Gastrocnemius medialis (tissue), 4 donors: ENCODE measurements at regions of chr12 and their contacts with region 1.

Region 1: DNA sequence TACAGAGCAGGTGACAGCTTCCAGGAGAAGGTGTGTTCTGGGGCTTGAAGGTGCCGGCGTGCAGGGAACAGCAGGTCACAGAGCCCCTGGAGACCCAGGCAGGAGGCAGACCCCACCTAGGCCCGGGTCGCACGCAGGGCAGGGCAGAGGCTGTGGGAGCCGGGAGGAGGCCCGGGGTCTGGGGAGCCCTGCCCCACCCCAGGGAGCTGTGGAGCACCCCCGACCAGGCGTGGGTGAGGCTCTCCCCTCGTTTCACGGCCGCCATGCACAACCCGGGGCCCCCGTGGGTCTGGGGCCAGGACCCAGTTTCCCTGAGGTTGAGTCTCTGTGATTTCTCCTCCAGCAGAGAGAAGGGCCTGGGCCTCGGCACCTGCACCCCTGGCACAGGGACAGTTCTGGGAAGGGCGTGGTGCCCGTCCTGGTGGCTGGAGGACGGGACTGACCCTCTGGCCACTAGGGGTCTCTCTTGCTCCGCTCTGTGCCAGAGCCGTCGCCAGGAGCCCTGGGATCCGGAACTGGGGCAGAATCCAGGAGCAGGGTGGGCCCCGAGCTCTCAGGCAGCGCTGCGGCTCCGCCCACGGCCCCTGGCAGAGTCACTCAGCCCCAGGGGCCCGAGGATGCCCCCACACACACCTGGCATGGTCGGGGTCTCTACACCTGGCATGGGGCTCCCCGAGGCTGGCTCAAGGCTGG is 75.2 kb upstream of the FBRSL1 start:
- DNase-seq: peak; percentile 47 to 57
- ATAC-seq: peak; percentile 89 to 92
- H3K4me3 ChIP-seq: no peak overlapping the region
- H3K27ac ChIP-seq: no peak overlapping the region
- H3K4me1 ChIP-seq: no peaks in the 10 kb centered on the region
- H3K27me3 ChIP-seq: peaks cover 30 to 33% (median 31%) of the 10 kb centered on the region in 3 donors
- CTCF ChIP-seq: peak; percentile 74 to 93 (median 86)
- POLR2A ChIP-seq: no peak

Region 2: DNA sequence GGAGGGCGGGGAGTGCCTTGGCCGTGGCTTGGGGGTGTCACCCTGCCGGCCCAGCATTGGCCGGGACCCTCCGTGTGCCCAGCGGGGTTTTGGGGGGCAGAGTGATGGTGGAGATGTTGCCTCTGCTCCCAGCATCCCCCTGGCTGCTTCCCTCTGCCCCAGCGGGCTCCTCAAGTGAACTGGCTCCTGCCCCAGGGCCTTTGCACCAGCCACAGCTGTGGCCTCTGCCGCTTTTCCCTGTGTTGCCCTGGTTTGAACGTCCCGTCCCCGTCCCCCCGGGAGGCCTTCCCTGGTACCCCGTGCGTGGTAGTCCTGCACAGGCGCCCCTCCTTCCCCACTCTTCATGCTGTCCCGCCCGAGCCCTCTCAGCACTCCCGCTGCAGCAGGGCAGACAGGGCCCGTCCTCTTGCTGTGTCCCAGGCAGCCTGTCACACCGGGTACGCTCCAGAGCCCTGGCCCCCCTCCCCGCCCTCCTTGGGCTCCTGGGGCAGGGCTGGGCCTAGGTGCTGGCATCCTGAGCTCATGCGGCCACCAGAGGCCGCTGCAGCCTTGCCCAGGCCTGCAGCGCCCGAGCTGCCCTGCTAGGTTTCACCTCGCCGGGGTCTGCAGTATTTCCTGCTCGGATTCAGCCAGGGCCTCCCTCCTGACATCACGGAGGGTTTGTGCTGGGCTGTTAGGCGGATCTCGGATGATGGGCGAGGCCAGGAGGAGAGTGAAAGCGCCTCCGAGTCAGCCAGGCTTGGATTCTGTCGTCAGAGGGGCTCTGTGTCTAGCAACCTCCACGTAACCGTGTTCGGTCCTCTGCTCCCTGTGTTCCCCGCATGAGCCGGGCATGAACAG is 261.1 kb before region 1 on chr12:
- in situ Hi-C with region 1: no loop called
- intact Hi-C with region 1: loop called (anchors 10 kb)
- DNase-seq: no peak
- ATAC-seq: peak; percentile 56 to 80
- H3K4me3 ChIP-seq: peak overlapping the region in 3 of 4 donors; percentile 27 to 48 (median 32)
- H3K27ac ChIP-seq: no peak overlapping the region
- H3K4me1 ChIP-seq: peaks cover 0 to 5% of the 10 kb centered on the region in 2 donors
- H3K27me3 ChIP-seq: no peaks in the 10 kb centered on the region
- CTCF ChIP-seq: peak; percentile 60 to 94 (median 83)
- POLR2A ChIP-seq: no peak

Region 3: GRCh38 chr12:132327351-132328171 is 87.2 kb before region 1 on chr12:
- in situ Hi-C with region 1: no loop called
- intact Hi-C with region 1: no loop called
- DNase-seq: peak in 1 of 2 donors; percentile 10
- ATAC-seq: peak in 1 of 2 donors; percentile 21
- H3K4me3 ChIP-seq: no peak overlapping the region
- H3K27ac ChIP-seq: no peak overlapping the region
- H3K4me1 ChIP-seq: no peaks in the 10 kb centered on the region
- H3K27me3 ChIP-seq: peaks cover 54 to 70% (median 60%) of the 10 kb centered on the region in 3 donors
- CTCF ChIP-seq: no peak
- POLR2A ChIP-seq: no peak

Region 4: DNA sequence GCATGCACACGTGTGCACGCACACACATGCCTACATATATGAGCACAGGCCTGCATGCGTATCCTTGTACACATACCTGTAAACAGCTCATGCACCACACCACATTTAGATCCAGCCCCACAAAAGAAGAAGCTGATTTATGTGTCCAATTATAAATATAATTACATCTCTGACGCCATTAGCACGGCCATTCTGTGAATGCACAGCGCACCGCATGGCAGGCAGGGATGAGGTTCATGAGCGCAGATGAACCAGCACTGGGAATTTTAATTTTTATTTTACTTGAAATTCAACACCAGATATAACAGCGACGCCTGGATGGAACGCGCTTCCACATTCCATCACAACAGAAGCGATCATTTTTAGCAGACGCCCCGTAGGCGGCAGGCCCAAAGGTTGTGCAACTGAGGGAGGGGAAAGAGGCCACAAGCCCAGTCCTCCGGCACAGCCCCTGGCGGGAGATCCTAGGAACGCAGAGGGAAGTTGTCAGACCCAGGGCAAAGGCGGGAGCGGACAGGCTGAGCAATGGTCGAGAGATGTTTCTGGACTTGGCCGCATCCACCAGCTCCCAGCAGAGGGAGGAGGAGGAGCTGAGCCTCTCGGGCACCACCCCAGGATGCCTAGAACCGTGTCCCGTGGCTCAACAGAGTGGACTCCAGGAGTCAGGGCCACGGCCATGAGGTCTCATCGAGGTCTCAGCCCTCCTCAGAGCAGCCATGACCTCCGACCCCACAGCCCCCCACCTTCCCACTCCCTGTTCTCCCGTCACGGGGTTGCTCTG is 47.5 kb before region 1 on chr12:
- in situ Hi-C with region 1: no loop called
- intact Hi-C with region 1: no loop called
- DNase-seq: no peak
- ATAC-seq: no peak
- H3K4me3 ChIP-seq: no peak overlapping the region
- H3K27ac ChIP-seq: no peak overlapping the region
- H3K4me1 ChIP-seq: no peaks in the 10 kb centered on the region
- H3K27me3 ChIP-seq: peaks cover 31 to 38% (median 38%) of the 10 kb centered on the region in 3 donors
- CTCF ChIP-seq: no peak
- POLR2A ChIP-seq: no peak

Region 5: DNA sequence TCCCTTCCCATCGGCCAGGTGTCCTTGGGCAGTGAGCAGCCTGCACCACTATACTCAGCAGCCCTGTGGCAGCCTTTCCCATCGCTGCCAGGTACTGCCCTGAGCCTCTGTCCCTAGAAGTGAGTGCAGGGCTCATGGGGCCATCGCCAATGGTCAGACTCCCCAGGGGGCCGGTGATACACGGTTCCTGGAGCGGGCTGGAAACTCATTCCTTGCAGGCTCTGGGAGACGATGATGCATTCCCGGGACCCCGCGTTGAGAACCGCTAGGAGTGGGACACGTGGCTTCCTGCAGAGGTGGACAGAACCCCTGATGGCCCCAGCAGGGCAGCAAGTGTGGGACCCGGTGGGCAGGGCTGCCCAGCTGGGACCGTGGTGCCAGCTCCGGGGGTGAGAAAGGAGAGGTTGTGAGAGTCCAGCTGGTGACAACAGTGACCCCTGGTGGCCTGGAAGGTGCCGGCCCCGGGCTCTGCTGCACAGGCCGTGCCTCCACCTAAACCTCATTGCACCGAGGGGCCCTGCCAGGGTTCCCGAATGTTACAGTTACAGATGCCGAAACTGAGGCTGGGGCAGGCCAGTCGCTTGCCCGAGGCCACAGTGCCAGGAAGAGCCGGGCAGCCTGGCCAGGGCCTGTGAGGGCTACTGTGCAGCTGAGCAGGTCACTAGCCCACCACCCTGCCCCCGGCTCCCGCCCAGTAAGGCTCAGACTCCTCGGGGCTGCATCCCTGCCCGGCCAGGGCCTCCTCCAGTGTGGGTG is 109.0 kb after region 1 on chr12:
- in situ Hi-C with region 1: loop called in 1 of 4 experiments (anchors 25 kb)
- intact Hi-C with region 1: loop called (anchors 1 kb)
- DNase-seq: peak; percentile 16 to 55
- ATAC-seq: peak; percentile 72 to 76
- H3K4me3 ChIP-seq: no peak overlapping the region
- H3K27ac ChIP-seq: no peak overlapping the region
- H3K4me1 ChIP-seq: peaks cover 6% of the 10 kb centered on the region in 2 donors
- H3K27me3 ChIP-seq: no peaks in the 10 kb centered on the region
- CTCF ChIP-seq: peak; percentile 62 to 84 (median 80)
- POLR2A ChIP-seq: no peak

Region 6: DNA sequence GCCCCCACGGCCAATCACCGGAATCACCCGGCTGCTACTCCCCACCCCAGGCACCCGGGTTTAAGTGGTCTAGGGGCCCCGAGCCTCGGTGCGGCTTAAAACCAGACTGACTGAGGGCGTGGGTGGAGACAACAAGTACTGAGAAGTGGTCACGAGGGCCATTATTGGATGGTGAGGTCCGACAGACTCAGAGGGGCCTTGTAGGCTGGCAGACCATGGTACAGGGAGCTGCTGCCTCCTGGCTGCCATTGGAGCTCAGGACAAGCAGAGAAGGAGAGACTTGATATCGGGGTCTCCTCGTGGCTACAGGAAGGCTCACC is 129.3 kb after region 1 on chr12:
- in situ Hi-C with region 1: loop called in 1 of 4 experiments (anchors 25 kb)
- intact Hi-C with region 1: no loop called
- DNase-seq: no peak
- ATAC-seq: no peak
- H3K4me3 ChIP-seq: no peak overlapping the region
- H3K27ac ChIP-seq: no peak overlapping the region
- H3K4me1 ChIP-seq: no peaks in the 10 kb centered on the region
- H3K27me3 ChIP-seq: no peaks in the 10 kb centered on the region
- CTCF ChIP-seq: no peak
- POLR2A ChIP-seq: no peak

Region 7: DNA sequence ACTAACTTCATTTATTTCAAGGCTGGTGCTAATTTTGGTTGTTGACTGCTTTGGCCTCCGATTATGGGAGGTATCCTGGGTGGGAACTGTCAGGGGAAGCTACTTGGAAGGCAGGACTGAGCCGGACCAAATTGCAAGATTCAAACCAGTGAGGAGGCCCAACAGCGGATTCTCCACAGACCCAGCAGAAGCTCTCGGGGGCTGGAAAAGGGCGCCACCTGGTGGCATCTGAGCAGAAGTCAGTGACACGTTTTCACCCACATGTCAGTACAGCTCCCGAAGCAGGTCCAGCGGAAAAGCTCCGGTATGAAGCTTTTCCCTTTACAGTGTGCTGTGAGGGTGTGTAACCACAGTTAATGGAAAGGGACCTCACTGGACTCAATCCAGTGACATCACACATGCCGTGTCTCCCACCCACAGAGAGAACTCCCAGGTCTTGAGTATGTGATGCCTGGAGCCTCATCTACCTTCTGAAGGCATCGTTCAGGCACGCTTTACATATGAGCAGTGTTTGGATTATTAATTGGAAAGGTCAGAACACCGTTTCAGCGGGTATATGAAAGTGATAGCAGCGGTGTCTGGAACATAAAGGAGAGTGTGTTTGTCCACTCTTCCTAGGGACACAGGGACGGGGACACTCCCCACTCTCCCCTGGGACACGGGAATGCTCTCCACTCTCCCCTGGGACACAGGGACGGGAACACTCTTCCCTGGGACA is 200.2 kb after region 1 on chr12:
- in situ Hi-C with region 1: loop called in 1 of 4 experiments (anchors 25 kb)
- intact Hi-C with region 1: loop called (anchors 5 kb)
- DNase-seq: peak; percentile 43 to 46
- ATAC-seq: peak; percentile 49 to 77
- H3K4me3 ChIP-seq: no peak overlapping the region
- H3K27ac ChIP-seq: no peak overlapping the region
- H3K4me1 ChIP-seq: no peaks in the 10 kb centered on the region
- H3K27me3 ChIP-seq: peaks cover 39 to 77% (median 58%) of the 10 kb centered on the region in 3 donors
- CTCF ChIP-seq: peak; percentile 41 to 79 (median 73)
- POLR2A ChIP-seq: no peak

Region 8: GRCh38 chr12:132638541-132639418 is 224.0 kb after region 1 on chr12:
- in situ Hi-C with region 1: no loop called
- intact Hi-C with region 1: no loop called
- DNase-seq: peak in 1 of 2 donors; percentile 48
- ATAC-seq: peak; percentile 39 to 56
- H3K4me3 ChIP-seq: no peak overlapping the region
- H3K27ac ChIP-seq: no peak overlapping the region
- H3K4me1 ChIP-seq: no peaks in the 10 kb centered on the region
- H3K27me3 ChIP-seq: no peaks in the 10 kb centered on the region
- CTCF ChIP-seq: peak in 4 of 5 experiments; percentile 28 to 57 (median 36)
- POLR2A ChIP-seq: no peak